HCT116 (cell line): ENCODE measurements at regions of chr1 and their contacts with region 1.

Region 1: GRCh38 chr1:50368179-50369012 is 54.8 kb downstream of the DMRTA2 start:
- DNase-seq: peak; percentile 21
- ATAC-seq: peak; percentile 92
- H3K4me3 ChIP-seq: no peak overlapping the region
- H3K27ac ChIP-seq: no peak overlapping the region
- H3K4me1 ChIP-seq: no peaks in the 10 kb centered on the region
- H3K27me3 ChIP-seq: peaks cover 34% of the 10 kb centered on the region
- CTCF ChIP-seq: peak; percentile 56 to 89 (median 83)
- POLR2A ChIP-seq: no peak
- RAD21 ChIP-seq: peak; percentile 93

Region 2: DNA sequence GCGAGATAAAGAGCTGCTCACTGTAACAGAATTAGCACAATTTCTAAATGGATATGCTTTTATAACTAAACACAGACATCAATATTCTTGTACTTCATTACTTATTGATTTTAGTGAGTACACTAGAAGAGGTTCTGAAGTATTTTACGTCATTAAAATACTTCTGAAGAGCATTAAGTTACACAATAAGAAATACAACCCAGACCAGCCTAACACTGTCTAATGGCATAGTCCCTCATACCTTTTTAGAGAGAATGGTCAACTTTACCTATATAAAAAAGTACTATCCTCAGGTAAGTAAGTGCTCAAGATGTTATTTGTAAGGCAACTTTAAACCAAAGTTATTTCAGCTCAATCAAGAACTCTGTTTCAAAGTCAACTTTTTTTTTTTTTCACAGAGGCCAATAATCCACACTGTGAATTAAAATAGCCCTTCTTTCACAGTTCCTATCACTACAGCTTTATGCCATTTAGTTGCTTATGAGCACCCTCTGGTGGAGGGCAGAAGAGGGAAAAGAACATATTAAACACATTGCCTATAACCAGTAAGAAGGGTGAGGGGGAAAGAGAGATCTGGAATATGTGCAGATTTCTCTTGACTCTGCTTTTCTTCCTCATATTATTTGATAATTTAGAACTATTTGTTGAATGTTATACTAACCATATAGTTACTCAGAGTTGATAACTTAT is 236.9 kb after region 1 on chr1:
- CTCF ChIA-PET with region 1: interaction called, 22 read pairs
- POLR2A ChIA-PET with region 1: no interaction called
- RAD21 ChIA-PET with region 1: interaction called in 1 of 2 experiments, 5 read pairs
- intact Hi-C with region 1: loop called (anchors 1 kb)
- DNase-seq: peak; percentile 27
- ATAC-seq: peak; percentile 86
- H3K4me3 ChIP-seq: no peak overlapping the region
- H3K27ac ChIP-seq: no peak overlapping the region
- H3K4me1 ChIP-seq: peaks cover 9 to 19% of the 10 kb centered on the region in 2 experiments; a peak in 3 of 4 replicates
- H3K27me3 ChIP-seq: no peaks in the 10 kb centered on the region
- CTCF ChIP-seq: peak; percentile 59 to 72 (median 68); a peak in 5 of 6 replicates
- POLR2A ChIP-seq: no peak
- RAD21 ChIP-seq: peak; percentile 74

Region 3: DNA sequence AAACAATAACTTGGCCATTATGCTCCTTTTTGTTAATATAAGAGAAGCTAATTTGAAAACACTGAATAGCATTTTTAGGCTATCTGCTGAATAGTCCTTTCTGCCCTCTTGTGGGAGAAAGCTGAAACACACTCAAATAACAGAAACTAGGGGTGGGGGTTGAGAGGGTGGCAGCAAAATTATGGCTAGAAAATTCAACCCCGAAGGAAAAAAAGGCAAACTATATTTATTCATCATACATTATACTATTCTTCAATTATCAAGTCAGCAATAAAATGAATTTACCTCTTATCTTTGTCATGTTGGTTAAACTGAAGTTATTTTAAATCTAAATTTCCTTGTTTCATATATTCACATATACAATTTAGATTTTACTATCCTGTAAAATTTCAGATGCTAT is 335.7 kb after region 1 on chr1:
- CTCF ChIA-PET with region 1: interaction called, 5 read pairs
- POLR2A ChIA-PET with region 1: no interaction called
- RAD21 ChIA-PET with region 1: no interaction called
- intact Hi-C with region 1: loop called (anchors 1 kb)
- DNase-seq: peak; percentile 6
- ATAC-seq: peak; percentile 63
- H3K4me3 ChIP-seq: no peak overlapping the region
- H3K27ac ChIP-seq: no peak overlapping the region
- H3K4me1 ChIP-seq: no peaks in the 10 kb centered on the region
- H3K27me3 ChIP-seq: no peaks in the 10 kb centered on the region
- CTCF ChIP-seq: peak; percentile 63 to 72 (median 71)
- POLR2A ChIP-seq: no peak
- RAD21 ChIP-seq: peak; percentile 63

Region 4: GRCh38 chr1:50735443-50735842 is 367.0 kb after region 1 on chr1:
- CTCF ChIA-PET with region 1: no interaction called
- POLR2A ChIA-PET with region 1: no interaction called
- RAD21 ChIA-PET with region 1: no interaction called
- intact Hi-C with region 1: loop called (anchors 1 kb)
- DNase-seq: no peak
- ATAC-seq: no peak
- H3K4me3 ChIP-seq: no peak overlapping the region
- H3K27ac ChIP-seq: no peak overlapping the region
- H3K4me1 ChIP-seq: no peaks in the 10 kb centered on the region
- H3K27me3 ChIP-seq: no peaks in the 10 kb centered on the region
- CTCF ChIP-seq: peak; percentile 54 to 68 (median 55); a peak in 5 of 6 replicates
- POLR2A ChIP-seq: no peak
- RAD21 ChIP-seq: peak; percentile 54

Region 5: GRCh38 chr1:51044834-51045233 is 676.4 kb after region 1 on chr1:
- CTCF ChIA-PET with region 1: no interaction called
- POLR2A ChIA-PET with region 1: no interaction called
- RAD21 ChIA-PET with region 1: no interaction called
- intact Hi-C with region 1: loop called (anchors 10 kb)
- DNase-seq: no peak
- ATAC-seq: no peak
- H3K4me3 ChIP-seq: no peak overlapping the region
- H3K27ac ChIP-seq: no peak overlapping the region
- H3K4me1 ChIP-seq: no peaks in the 10 kb centered on the region
- H3K27me3 ChIP-seq: no peaks in the 10 kb centered on the region
- CTCF ChIP-seq: peak in 2 of 3 experiments; percentile 47 to 75; a peak in 2 of 6 replicates
- POLR2A ChIP-seq: no peak
- RAD21 ChIP-seq: peak; percentile 69